Heart right ventricle (tissue), 16 donors: ENCODE measurements at regions of chr2 and their contacts with region 1.

Region 1: DNA sequence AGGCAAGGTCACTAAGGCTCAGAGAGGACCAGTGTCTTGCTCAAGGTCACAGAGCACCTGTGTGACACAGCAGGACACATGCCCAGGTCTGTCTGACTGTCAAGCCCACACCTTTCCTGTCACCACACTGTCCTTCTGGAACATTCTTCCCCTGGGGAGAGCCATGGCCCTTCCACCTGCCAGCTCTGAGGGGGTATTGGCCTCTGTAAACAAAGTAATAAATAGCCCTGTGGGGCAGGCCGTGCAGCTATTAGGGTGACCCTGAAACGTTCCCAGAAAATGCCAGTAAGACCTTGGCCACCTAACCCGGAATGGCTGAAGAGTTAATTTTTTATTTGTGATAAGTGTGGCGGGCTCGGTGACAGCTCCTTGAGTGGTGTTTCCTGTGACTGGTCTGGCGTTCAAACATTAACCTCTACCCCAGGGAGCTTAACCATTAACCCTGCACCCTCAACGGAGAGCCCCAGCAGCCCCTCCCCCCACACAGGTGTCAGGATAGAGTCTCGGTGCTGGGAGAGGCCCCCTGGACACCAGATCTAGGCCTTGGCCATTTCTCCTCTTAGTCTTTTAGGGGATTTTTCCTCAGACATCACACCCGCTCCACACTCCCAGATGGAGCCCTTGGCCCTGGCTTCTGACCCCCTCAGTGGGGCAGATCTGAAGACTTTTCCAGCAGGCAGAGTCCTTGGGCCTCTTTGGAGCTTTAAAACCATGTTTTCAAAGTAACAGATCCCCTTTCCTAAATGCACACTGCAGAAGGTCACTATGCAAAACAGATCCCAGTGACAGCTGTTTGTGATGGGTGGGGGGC is 36.6 kb downstream of the SCTR start:
- DNase-seq: no peak
- ATAC-seq: peak in 1 of 8 donors; percentile 19
- H3K4me3 ChIP-seq: no peak overlapping the region
- H3K27ac ChIP-seq: peak overlapping the region; percentile 42 to 89 (median 74)
- H3K4me1 ChIP-seq: peaks cover 7 to 98% (median 59%) of the 10 kb centered on the region in 9 donors
- H3K27me3 ChIP-seq: peaks cover 0 to 3% (median 0%) of the 10 kb centered on the region in 7 donors
- CTCF ChIP-seq: no peak

Region 2: GRCh38 chr2:119598596-119599263 is 111.1 kb after region 1 on chr2:
- intact Hi-C with region 1: loop called in 1 of 10 experiments (anchors 5 kb)
- DNase-seq: no peak
- ATAC-seq: peak in 7 of 8 donors; percentile 26 to 86 (median 74)
- H3K4me3 ChIP-seq: no peak overlapping the region
- H3K27ac ChIP-seq: peak overlapping the region in 6 of 10 donors; percentile 29 to 79 (median 71)
- H3K4me1 ChIP-seq: peaks cover 0 to 33% (median 21%) of the 10 kb centered on the region in 9 donors
- H3K27me3 ChIP-seq: no peaks in the 10 kb centered on the region
- CTCF ChIP-seq: no peak

Region 3: GRCh38 chr2:119694470-119694844 is 206.8 kb after region 1 on chr2:
- intact Hi-C with region 1: no loop called
- DNase-seq: no peak
- ATAC-seq: no peak
- H3K4me3 ChIP-seq: no peak overlapping the region
- H3K27ac ChIP-seq: no peak overlapping the region
- H3K4me1 ChIP-seq: no peaks in the 10 kb centered on the region
- H3K27me3 ChIP-seq: peaks cover 0 to 15% (median 0%) of the 10 kb centered on the region in 7 donors
- CTCF ChIP-seq: no peak